CD4-positive, alpha-beta T cell (primary cell): ENCODE measurements at regions of chr14 and their contacts with region 1.

Region 1: GRCh38 chr14:92106143-92106926 is at the start of gene ATXN3:
- DNase-seq: peak; percentile 89 to 99 (median 94)
- ATAC-seq: peak; percentile 93
- H3K4me3 ChIP-seq: peak within 1 kb of the TSS; percentile 66
- H3K4me3 Mint-ChIP-seq: peak within 1 kb of the TSS; percentile 95
- H3K27ac ChIP-seq: peak within 1 kb of the TSS; percentile 81 to 84
- H3K27ac Mint-ChIP-seq: peak within 1 kb of the TSS; percentile 84
- H3K4me1 ChIP-seq: peaks cover 45% of the 10 kb centered on the region
- H3K4me1 Mint-ChIP-seq: peaks cover 73% of the 10 kb centered on the region
- H3K27me3 ChIP-seq: no peaks in the 10 kb centered on the region
- H3K27me3 Mint-ChIP-seq: no peaks in the 10 kb centered on the region
- CTCF ChIP-seq: peak; percentile 84
- total RNA-seq, gene ATXN3: 21.5 to 22.1 TPM

Region 2: GRCh38 chr14:90331497-90332435 is 1774.6 kb before region 1 on chr14 and contains the start of gene NRDE2:
- CTCF ChIA-PET with region 1: no interaction called
- POLR2A ChIA-PET with region 1: no interaction called
- intact Hi-C with region 1: loop called in 1 of 2 experiments (anchors 10 kb)
- DNase-seq: peak; percentile 81 to 99 (median 93)
- ATAC-seq: peak; percentile 95
- H3K4me3 ChIP-seq: peak within 1 kb of the TSS; percentile 83
- H3K4me3 Mint-ChIP-seq: peak within 1 kb of the TSS; percentile 93
- H3K27ac ChIP-seq: peak within 1 kb of the TSS; percentile 60 to 72
- H3K27ac Mint-ChIP-seq: peak within 1 kb of the TSS; percentile 93
- H3K4me1 ChIP-seq: peaks cover 13% of the 10 kb centered on the region
- H3K4me1 Mint-ChIP-seq: peaks cover 40% of the 10 kb centered on the region
- H3K27me3 ChIP-seq: no peaks in the 10 kb centered on the region
- H3K27me3 Mint-ChIP-seq: peaks cover 11% of the 10 kb centered on the region
- CTCF ChIP-seq: no peak
- total RNA-seq, gene NRDE2: 17.5 to 17.9 TPM

Region 3: GRCh38 chr14:91510174-91511042 is 595.9 kb before region 1 on chr14 and contains the start of gene PPP4R3A:
- CTCF ChIA-PET with region 1: no interaction called
- POLR2A ChIA-PET with region 1: interaction called, 9 read pairs
- intact Hi-C with region 1: loop called in 1 of 2 experiments (anchors 2 kb)
- DNase-seq: peak; percentile 82 to 98 (median 90)
- ATAC-seq: peak; percentile 85
- H3K4me3 ChIP-seq: peak within 1 kb of the TSS; percentile 90
- H3K4me3 Mint-ChIP-seq: peak within 1 kb of the TSS; percentile 100
- H3K27ac ChIP-seq: peak within 1 kb of the TSS; percentile 99
- H3K27ac Mint-ChIP-seq: peak within 1 kb of the TSS; percentile 100
- H3K4me1 ChIP-seq: peaks cover 23% of the 10 kb centered on the region
- H3K4me1 Mint-ChIP-seq: peaks cover 44% of the 10 kb centered on the region
- H3K27me3 ChIP-seq: no peaks in the 10 kb centered on the region
- H3K27me3 Mint-ChIP-seq: no peaks in the 10 kb centered on the region
- CTCF ChIP-seq: no peak
- total RNA-seq, gene PPP4R3A: 189 to 205 TPM

Region 4: GRCh38 chr14:91649930-91650329 is 456.4 kb before region 1 on chr14:
- CTCF ChIA-PET with region 1: no interaction called
- POLR2A ChIA-PET with region 1: no interaction called
- intact Hi-C with region 1: loop called in 1 of 2 experiments (anchors 1 kb)
- DNase-seq: peak in 5 of 14 experiments; percentile 11 to 54 (median 49)
- ATAC-seq: peak; percentile 76
- H3K4me3 ChIP-seq: no peak overlapping the region
- H3K4me3 Mint-ChIP-seq: no peak overlapping the region
- H3K27ac ChIP-seq: no peak overlapping the region
- H3K27ac Mint-ChIP-seq: no peak overlapping the region
- H3K4me1 ChIP-seq: no peaks in the 10 kb centered on the region
- H3K4me1 Mint-ChIP-seq: no peaks in the 10 kb centered on the region
- H3K27me3 ChIP-seq: no peaks in the 10 kb centered on the region
- H3K27me3 Mint-ChIP-seq: no peaks in the 10 kb centered on the region
- CTCF ChIP-seq: peak; percentile 79

Region 5: GRCh38 chr14:92039719-92040430 is 66.5 kb before region 1 on chr14 and contains the start of gene TRIP11:
- CTCF ChIA-PET with region 1: interaction called, 8 read pairs
- POLR2A ChIA-PET with region 1: interaction called, 97 read pairs
- intact Hi-C with region 1: loop called (anchors 1 kb)
- DNase-seq: peak; percentile 88 to 97 (median 94)
- ATAC-seq: peak; percentile 86
- H3K4me3 ChIP-seq: peak within 1 kb of the TSS; percentile 72
- H3K4me3 Mint-ChIP-seq: peak within 1 kb of the TSS; percentile 99
- H3K27ac ChIP-seq: peak within 1 kb of the TSS; percentile 90 to 92
- H3K27ac Mint-ChIP-seq: no peak within 1 kb of the TSS
- H3K4me1 ChIP-seq: peaks cover 38% of the 10 kb centered on the region
- H3K4me1 Mint-ChIP-seq: peaks cover 53% of the 10 kb centered on the region
- H3K27me3 ChIP-seq: no peaks in the 10 kb centered on the region
- H3K27me3 Mint-ChIP-seq: no peaks in the 10 kb centered on the region
- CTCF ChIP-seq: no peak
- total RNA-seq, gene TRIP11: 30.0 to 31.2 TPM

Region 6: GRCh38 chr14:92121670-92122350 is 15.5 kb after region 1 on chr14 and contains the starts of genes CPSF2 and NDUFB1:
- CTCF ChIA-PET with region 1: interaction called, 134 read pairs
- POLR2A ChIA-PET with region 1: interaction called, 116 read pairs
- intact Hi-C with region 1: loop called (anchors 1 kb)
- DNase-seq: peak; percentile 74 to 91 (median 82)
- ATAC-seq: peak; percentile 87
- H3K4me3 ChIP-seq: peak within 1 kb of the TSS; percentile 100
- H3K4me3 Mint-ChIP-seq: peak within 1 kb of the TSS; percentile 100
- H3K27ac ChIP-seq: peak within 1 kb of the TSS; percentile 84 to 93
- H3K27ac Mint-ChIP-seq: peak within 1 kb of the TSS; percentile 100
- H3K4me1 ChIP-seq: peaks cover 39% of the 10 kb centered on the region
- H3K4me1 Mint-ChIP-seq: peaks cover 59% of the 10 kb centered on the region
- H3K27me3 ChIP-seq: no peaks in the 10 kb centered on the region
- H3K27me3 Mint-ChIP-seq: no peaks in the 10 kb centered on the region
- CTCF ChIP-seq: no peak
- total RNA-seq, gene CPSF2: 12.4 to 12.9 TPM
- total RNA-seq, gene NDUFB1: 45.3 to 48.1 TPM

Region 7: GRCh38 chr14:92224358-92224954 is 118.1 kb after region 1 on chr14:
- CTCF ChIA-PET with region 1: no interaction called
- POLR2A ChIA-PET with region 1: no interaction called
- intact Hi-C with region 1: no loop called
- DNase-seq: no peak
- ATAC-seq: no peak
- H3K4me3 ChIP-seq: no peak overlapping the region
- H3K4me3 Mint-ChIP-seq: no peak overlapping the region
- H3K27ac ChIP-seq: no peak overlapping the region
- H3K27ac Mint-ChIP-seq: no peak overlapping the region
- H3K4me1 ChIP-seq: no peaks in the 10 kb centered on the region
- H3K4me1 Mint-ChIP-seq: no peaks in the 10 kb centered on the region
- H3K27me3 ChIP-seq: no peaks in the 10 kb centered on the region
- H3K27me3 Mint-ChIP-seq: peaks cover 5% of the 10 kb centered on the region
- CTCF ChIP-seq: no peak

Region 8: DNA sequence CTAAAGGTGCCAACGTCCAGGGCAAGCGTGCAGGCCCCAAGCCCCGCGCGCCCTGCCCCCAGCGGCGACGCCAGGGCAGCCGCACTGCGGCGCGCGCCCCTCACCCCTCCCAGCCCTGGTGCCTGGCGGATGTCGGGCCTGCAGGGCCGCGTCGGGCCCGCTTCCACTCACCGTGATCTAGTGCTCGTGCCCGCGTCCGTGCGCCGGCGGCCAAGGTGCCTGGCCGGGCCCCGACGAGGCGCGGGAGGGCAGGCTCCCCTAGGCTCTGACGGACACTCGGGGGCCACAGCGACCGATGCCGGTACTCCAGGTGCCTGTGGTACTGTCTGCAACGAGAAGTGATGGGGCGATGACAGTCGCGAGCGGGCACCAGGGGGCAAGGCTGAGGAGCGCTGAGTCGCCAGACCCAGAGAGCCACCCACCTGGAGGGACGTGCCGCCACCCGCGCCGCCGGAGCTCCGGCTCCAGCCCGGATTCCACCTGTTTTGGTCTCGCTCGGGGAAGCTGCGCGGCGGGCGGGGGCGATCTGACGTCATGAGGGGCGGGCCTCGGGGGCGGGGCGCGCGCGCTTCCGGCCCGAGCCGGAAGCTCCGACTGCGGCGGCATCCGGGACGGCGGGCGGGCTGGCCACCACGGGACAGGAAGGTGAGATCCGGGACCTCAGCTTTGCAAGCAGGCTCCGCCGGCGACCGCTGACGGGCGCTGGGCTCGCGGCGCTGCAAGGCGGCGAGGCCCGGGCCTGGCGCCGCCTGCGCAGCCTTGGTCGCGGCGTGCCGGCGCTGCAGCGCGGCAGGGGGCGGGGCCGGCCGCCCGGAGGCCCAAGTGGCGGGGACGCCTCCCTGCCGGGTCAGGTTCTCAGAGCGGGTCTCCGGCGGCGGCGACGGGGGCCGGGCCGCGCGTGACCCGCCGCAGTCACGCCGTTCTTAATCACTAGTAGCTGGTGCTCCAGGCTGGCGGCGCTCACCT is 1078.3 kb after region 1 on chr14 and contains the starts of genes LYSET and MOAP1:
- CTCF ChIA-PET with region 1: no interaction called
- POLR2A ChIA-PET with region 1: interaction called, 3 read pairs
- intact Hi-C with region 1: loop called in 1 of 2 experiments (anchors 5 kb)
- DNase-seq: peak; percentile 83 to 98 (median 91)
- ATAC-seq: peak; percentile 84
- H3K4me3 ChIP-seq: peak within 1 kb of the TSS; percentile 89
- H3K4me3 Mint-ChIP-seq: peak within 1 kb of the TSS; percentile 98
- H3K27ac ChIP-seq: peak within 1 kb of the TSS; percentile 96 to 97
- H3K27ac Mint-ChIP-seq: peak within 1 kb of the TSS; percentile 98
- H3K4me1 ChIP-seq: peaks cover 31% of the 10 kb centered on the region
- H3K4me1 Mint-ChIP-seq: peaks cover 56% of the 10 kb centered on the region
- H3K27me3 ChIP-seq: no peaks in the 10 kb centered on the region
- H3K27me3 Mint-ChIP-seq: no peaks in the 10 kb centered on the region
- CTCF ChIP-seq: peak; percentile 29
- total RNA-seq, gene LYSET: 5.8 TPM
- total RNA-seq, gene MOAP1: 127 to 130 TPM